CD8-positive, alpha-beta T cell (primary cell): ENCODE measurements at regions of chr11 and their contacts with region 1.

Region 1: GRCh38 chr11:108128772-108129171 is 7.4 kb downstream of the ACAT1 start:
- DNase-seq: no peak
- ATAC-seq: no peak
- H3K4me3 ChIP-seq: no peak overlapping the region
- H3K4me3 Mint-ChIP-seq: no peak overlapping the region
- H3K27ac ChIP-seq: no peak overlapping the region
- H3K27ac Mint-ChIP-seq: no peak overlapping the region
- H3K4me1 ChIP-seq: peaks cover 7% of the 10 kb centered on the region
- H3K4me1 Mint-ChIP-seq: peaks cover 35% of the 10 kb centered on the region
- H3K27me3 ChIP-seq: no peaks in the 10 kb centered on the region
- H3K27me3 Mint-ChIP-seq: no peaks in the 10 kb centered on the region
- CTCF ChIP-seq: no peak

Region 2: GRCh38 chr11:108144615-108145014 is 15.8 kb after region 1 on chr11:
- CTCF ChIA-PET with region 1: no interaction called
- POLR2A ChIA-PET with region 1: no interaction called
- intact Hi-C with region 1: loop called in 1 of 2 experiments (anchors 1 kb)
- DNase-seq: no peak
- ATAC-seq: no peak
- H3K4me3 ChIP-seq: no peak overlapping the region
- H3K4me3 Mint-ChIP-seq: no peak overlapping the region
- H3K27ac ChIP-seq: no peak overlapping the region
- H3K27ac Mint-ChIP-seq: peak overlapping the region; percentile 79
- H3K4me1 ChIP-seq: no peaks in the 10 kb centered on the region
- H3K4me1 Mint-ChIP-seq: peaks cover 6% of the 10 kb centered on the region
- H3K27me3 ChIP-seq: no peaks in the 10 kb centered on the region
- H3K27me3 Mint-ChIP-seq: no peaks in the 10 kb centered on the region
- CTCF ChIP-seq: no peak

Region 3: DNA sequence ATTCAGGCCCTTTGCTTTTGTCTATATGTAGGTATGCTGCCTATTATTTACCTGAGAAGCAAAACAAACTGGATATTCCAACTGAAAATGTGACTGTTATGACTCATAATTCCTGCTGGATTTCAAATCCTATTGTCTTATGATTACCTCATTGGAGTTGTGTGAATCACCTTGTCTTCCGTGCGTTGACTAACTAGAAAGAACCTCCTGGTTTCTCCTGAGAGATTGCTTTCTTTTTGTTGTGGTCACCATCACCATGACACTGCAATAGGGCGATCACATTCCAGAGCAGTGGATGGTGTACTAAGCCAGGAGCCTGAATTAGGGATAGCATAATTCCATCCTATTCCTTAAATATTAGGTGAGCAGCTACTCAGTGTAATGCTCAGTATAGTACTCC is 487.8 kb after region 1 on chr11:
- CTCF ChIA-PET with region 1: no interaction called
- POLR2A ChIA-PET with region 1: no interaction called
- intact Hi-C with region 1: no loop called
- DNase-seq: no peak
- ATAC-seq: no peak
- H3K4me3 ChIP-seq: no peak overlapping the region
- H3K4me3 Mint-ChIP-seq: no peak overlapping the region
- H3K27ac ChIP-seq: no peak overlapping the region
- H3K27ac Mint-ChIP-seq: no peak overlapping the region
- H3K4me1 ChIP-seq: no peaks in the 10 kb centered on the region
- H3K4me1 Mint-ChIP-seq: no peaks in the 10 kb centered on the region
- H3K27me3 ChIP-seq: peaks cover 0 to 1% of the 10 kb centered on the region in 2 experiments
- H3K27me3 Mint-ChIP-seq: peaks cover 10% of the 10 kb centered on the region
- CTCF ChIP-seq: no peak